ENCODE measurements at regions of chr22 and their contacts with region 1.

Region 1: GRCh38 chr22:37608477-37609239 is at the start of gene GGA1:
- DNase-seq: peak; percentile 96
- H3K4me3 Mint-ChIP-seq: peak within 1 kb of the TSS; percentile 85
- H3K27ac Mint-ChIP-seq: peak within 1 kb of the TSS; percentile 98
- H3K4me1 Mint-ChIP-seq: peaks cover 12% of the 10 kb centered on the region
- H3K27me3 Mint-ChIP-seq: no peaks in the 10 kb centered on the region
- CTCF ChIP-seq: no peak
- total RNA-seq, gene GGA1: 52.7 and 59.1 TPM in 2 replicates

Region 2: GRCh38 chr22:37538590-37539357 is 69.9 kb before region 1 on chr22:
- CTCF ChIA-PET with region 1: interaction called, 21 read pairs
- POLR2A ChIA-PET with region 1: interaction called, 6 read pairs
- intact Hi-C with region 1: no loop called
- DNase-seq: peak; percentile 95
- H3K4me3 Mint-ChIP-seq: no peak overlapping the region
- H3K27ac Mint-ChIP-seq: peak overlapping the region; percentile 34
- H3K4me1 Mint-ChIP-seq: peaks cover 32% of the 10 kb centered on the region
- H3K27me3 Mint-ChIP-seq: no peaks in the 10 kb centered on the region
- CTCF ChIP-seq: peak; percentile 97

Region 3: GRCh38 chr22:37561212-37562048 is 47.2 kb before region 1 on chr22:
- CTCF ChIA-PET with region 1: interaction called, 6 read pairs
- POLR2A ChIA-PET with region 1: interaction called, 24 read pairs
- intact Hi-C with region 1: no loop called
- DNase-seq: peak; percentile 95
- H3K4me3 Mint-ChIP-seq: peak overlapping the region; percentile 81
- H3K27ac Mint-ChIP-seq: peak overlapping the region; percentile 71
- H3K4me1 Mint-ChIP-seq: peaks cover 26% of the 10 kb centered on the region
- H3K27me3 Mint-ChIP-seq: no peaks in the 10 kb centered on the region
- CTCF ChIP-seq: peak; percentile 86

Region 4: DNA sequence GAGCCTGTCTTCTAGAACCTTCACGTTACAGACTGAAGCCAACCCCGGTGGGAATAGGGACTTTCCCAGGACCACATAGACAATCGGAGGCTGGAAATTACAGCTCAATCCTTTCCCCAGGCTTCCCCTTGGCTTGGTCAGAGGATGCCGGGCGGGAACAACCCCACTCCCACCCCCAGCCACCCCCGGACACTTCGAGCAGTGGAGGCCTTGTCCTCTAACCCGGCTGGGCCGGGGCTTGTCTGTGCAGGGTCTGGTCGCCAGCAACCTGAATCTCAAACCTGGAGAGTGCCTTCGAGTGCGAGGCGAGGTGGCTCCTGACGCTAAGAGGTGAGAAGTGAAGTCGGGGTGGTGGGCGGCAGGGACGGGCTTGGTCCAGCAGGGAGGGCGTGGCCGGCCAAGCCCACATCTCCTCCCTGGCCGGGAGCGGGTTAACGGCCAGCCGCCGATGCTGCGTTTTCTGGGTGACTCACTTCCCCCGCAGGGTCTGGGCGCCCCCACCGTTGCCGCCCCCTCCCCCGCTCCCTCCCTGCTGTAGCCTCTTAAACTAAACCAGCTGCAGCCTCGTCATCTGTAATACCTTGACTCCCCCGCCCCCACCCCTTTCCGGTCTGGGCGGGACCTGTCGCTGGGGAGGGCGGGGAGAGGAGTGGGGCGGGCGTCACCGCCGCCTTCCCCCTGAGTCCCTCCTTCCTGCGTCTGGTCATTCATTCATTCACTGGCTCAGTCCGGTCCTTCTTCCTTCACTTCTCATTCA is 68.3 kb after region 1 on chr22:
- CTCF ChIA-PET with region 1: interaction called, 4 read pairs
- POLR2A ChIA-PET with region 1: interaction called, 24 read pairs
- intact Hi-C with region 1: loop called (anchors 5 kb)
- DNase-seq: peak; percentile 94
- H3K4me3 Mint-ChIP-seq: peak overlapping the region; percentile 75
- H3K27ac Mint-ChIP-seq: peak overlapping the region; percentile 66
- H3K4me1 Mint-ChIP-seq: peaks cover 25% of the 10 kb centered on the region
- H3K27me3 Mint-ChIP-seq: no peaks in the 10 kb centered on the region
- CTCF ChIP-seq: no peak

Region 5: GRCh38 chr22:37686002-37686982 is 77.6 kb after region 1 on chr22 and contains the start of gene NOL12:
- CTCF ChIA-PET with region 1: interaction called, 8 read pairs
- POLR2A ChIA-PET with region 1: interaction called, 31 read pairs
- intact Hi-C with region 1: no loop called
- DNase-seq: peak; percentile 90
- H3K4me3 Mint-ChIP-seq: peak within 1 kb of the TSS; percentile 96
- H3K27ac Mint-ChIP-seq: peak within 1 kb of the TSS; percentile 96
- H3K4me1 Mint-ChIP-seq: peaks cover 30% of the 10 kb centered on the region
- H3K27me3 Mint-ChIP-seq: no peaks in the 10 kb centered on the region
- CTCF ChIP-seq: no peak
- total RNA-seq, gene NOL12: 47.1 and 50.8 TPM in 2 replicates

Measured in MCF 10A (cell line).